Ascending aorta (tissue), 2 donors: ENCODE measurements at regions of chr3 and their contacts with region 1.

Region 1: DNA sequence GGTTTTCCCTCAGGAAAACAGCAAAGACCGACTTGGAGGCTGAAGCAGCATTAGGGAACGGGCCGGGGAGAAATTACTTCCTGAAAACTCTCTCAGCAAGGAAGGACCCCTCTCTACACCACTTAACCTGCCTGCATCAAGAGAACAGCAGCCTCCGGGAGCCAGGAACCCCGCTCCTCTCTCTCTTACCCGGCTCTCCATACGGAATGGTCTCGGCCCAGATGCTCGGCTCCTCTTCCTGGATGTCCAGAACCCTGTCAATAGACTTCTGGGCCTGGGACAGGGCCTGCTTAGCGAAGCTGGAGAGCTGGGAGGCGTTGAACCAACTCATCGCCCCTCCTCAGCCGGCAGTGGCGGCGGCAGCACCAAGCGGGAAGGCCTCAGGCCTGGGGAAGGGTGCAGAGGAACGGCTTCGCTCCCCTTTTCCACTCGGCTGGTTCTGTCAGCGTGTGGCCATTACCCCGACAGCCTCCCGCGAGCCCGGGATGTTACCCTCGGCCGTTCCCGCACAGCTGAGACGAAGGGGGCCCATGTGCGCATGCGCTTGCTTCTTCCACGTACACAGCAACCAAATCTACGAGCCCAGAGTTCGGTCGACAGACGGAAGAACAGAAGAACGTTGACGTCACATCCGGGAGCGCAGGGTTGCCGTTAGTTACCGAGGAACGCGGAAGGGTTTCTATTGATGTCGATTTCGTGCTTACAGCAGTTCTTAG is at the start of gene TMF1:
- DNase-seq: peak; percentile 90 to 99
- H3K4me3 ChIP-seq: peak within 1 kb of the TSS; percentile 72 to 78
- H3K27ac ChIP-seq: peak within 1 kb of the TSS; percentile 93 to 95
- H3K4me1 ChIP-seq: peaks cover 3 to 20% of the 10 kb centered on the region in 2 donors
- H3K27me3 ChIP-seq: no peaks in the 10 kb centered on the region
- CTCF ChIP-seq: no peak
- total RNA-seq, gene TMF1: 35.2 TPM

Region 2: GRCh38 chr3:69013253-69014021 is 38.5 kb before region 1 on chr3 and contains the start of gene EOGT:
- intact Hi-C with region 1: loop called (anchors 1 kb)
- DNase-seq: peak; percentile 67 to 94
- H3K4me3 ChIP-seq: peak within 1 kb of the TSS; percentile 77 to 91
- H3K27ac ChIP-seq: peak within 1 kb of the TSS; percentile 99 to 100
- H3K4me1 ChIP-seq: peaks cover 0 to 31% of the 10 kb centered on the region in 2 donors
- H3K27me3 ChIP-seq: no peaks in the 10 kb centered on the region
- CTCF ChIP-seq: peak; percentile 64 to 70 (median 69)
- total RNA-seq, gene EOGT: 50.4 TPM

Region 3: GRCh38 chr3:69080233-69080920 is 28.5 kb after region 1 on chr3 and contains the start of gene UBA3:
- intact Hi-C with region 1: loop called (anchors 1 kb)
- DNase-seq: peak; percentile 64 to 95
- H3K4me3 ChIP-seq: peak within 1 kb of the TSS; percentile 71 to 93
- H3K27ac ChIP-seq: peak within 1 kb of the TSS; percentile 75 to 78
- H3K4me1 ChIP-seq: peaks cover 10 to 32% of the 10 kb centered on the region in 2 donors
- H3K27me3 ChIP-seq: no peaks in the 10 kb centered on the region
- CTCF ChIP-seq: no peak
- total RNA-seq, gene UBA3: 18.2 TPM